ENCODE measurements at regions of chr10 and their contacts with region 1.

Region 1: DNA sequence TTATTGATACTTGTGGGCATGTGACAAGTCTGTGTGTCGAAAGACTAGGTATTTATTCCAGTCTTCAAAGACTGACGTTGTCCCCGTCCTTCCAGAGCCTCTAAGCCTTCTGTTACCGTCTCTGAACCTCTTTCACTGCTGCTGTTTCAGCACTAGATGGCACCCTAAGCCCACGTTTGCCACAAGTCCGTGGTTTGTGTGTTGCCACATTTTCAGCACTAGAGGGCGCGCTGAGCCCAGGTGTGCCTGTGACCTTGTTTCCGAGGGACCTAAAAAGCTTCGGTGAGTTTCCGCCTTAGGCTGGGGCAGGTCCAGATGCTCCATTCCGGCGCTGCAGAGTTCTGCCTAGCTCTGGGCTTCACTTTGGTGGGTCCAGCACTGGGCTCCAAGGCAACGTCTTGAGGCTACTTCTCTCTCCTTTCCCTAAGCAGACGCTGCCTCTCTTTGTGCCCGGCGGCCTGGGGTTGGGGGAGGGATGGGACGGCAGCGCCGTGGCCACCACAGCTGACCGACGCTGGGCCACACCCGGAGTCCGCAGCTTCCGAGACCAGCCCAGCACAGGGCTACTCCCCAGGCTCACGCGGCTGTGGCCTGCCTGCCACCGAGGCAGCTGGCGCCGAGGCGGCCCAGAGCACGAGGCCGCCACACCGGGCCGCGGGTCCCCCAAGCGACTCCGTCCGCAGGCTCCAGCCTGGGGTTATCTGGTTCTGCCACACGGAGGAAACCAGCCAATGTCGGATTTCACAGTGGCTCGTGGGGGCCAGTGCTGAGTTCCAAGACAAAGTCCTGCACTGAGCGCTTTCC is 520.2 kb downstream of the REEP3 start:
- DNase-seq: peak; percentile 65
- ATAC-seq: peak; percentile 84
- H3K4me3 ChIP-seq: no peak overlapping the region
- H3K27ac ChIP-seq: peak overlapping the region; percentile 38
- H3K4me1 ChIP-seq: peaks cover 34% of the 10 kb centered on the region
- H3K27me3 ChIP-seq: peaks cover 0 to 10% of the 10 kb centered on the region in 2 experiments; a peak in 2 of 5 replicates
- CTCF ChIP-seq: peak; percentile 100
- EP300 ChIP-seq: no peak
- POLR2A ChIP-seq: no peak
- RAD21 ChIP-seq: peak; percentile 100

Region 2: GRCh38 chr10:63504125-63504880 is 537.1 kb before region 1 on chr10:
- CTCF ChIA-PET with region 1: no interaction called
- POLR2A ChIA-PET with region 1: no interaction called
- in situ Hi-C with region 1: no loop called
- intact Hi-C with region 1: no loop called
- DNase-seq: no peak
- ATAC-seq: no peak; the same call in 2 of the 3 replicates
- H3K4me3 ChIP-seq: no peak overlapping the region
- H3K27ac ChIP-seq: peak overlapping the region; percentile 0
- H3K4me1 ChIP-seq: peaks cover 39% of the 10 kb centered on the region
- H3K27me3 ChIP-seq: no peaks in the 10 kb centered on the region
- CTCF ChIP-seq: no peak
- EP300 ChIP-seq: no peak
- POLR2A ChIP-seq: no peak
- RAD21 ChIP-seq: no peak

Region 3: GRCh38 chr10:63700209-63700613 is 341.2 kb before region 1 on chr10:
- CTCF ChIA-PET with region 1: no interaction called
- POLR2A ChIA-PET with region 1: no interaction called
- in situ Hi-C with region 1: no loop called
- intact Hi-C with region 1: no loop called
- DNase-seq: no peak
- ATAC-seq: no peak
- H3K4me3 ChIP-seq: no peak overlapping the region
- H3K27ac ChIP-seq: no peak overlapping the region
- H3K4me1 ChIP-seq: no peaks in the 10 kb centered on the region
- H3K27me3 ChIP-seq: no peaks in the 10 kb centered on the region
- CTCF ChIP-seq: no peak
- EP300 ChIP-seq: no peak
- POLR2A ChIP-seq: no peak
- RAD21 ChIP-seq: no peak

Region 4: GRCh38 chr10:64075604-64076003 is 34.2 kb after region 1 on chr10:
- CTCF ChIA-PET with region 1: no interaction called
- POLR2A ChIA-PET with region 1: no interaction called
- in situ Hi-C with region 1: no loop called
- intact Hi-C with region 1: loop called (anchors 1 kb)
- DNase-seq: peak; percentile 53
- ATAC-seq: peak; percentile 96
- H3K4me3 ChIP-seq: no peak overlapping the region
- H3K27ac ChIP-seq: peak overlapping the region; percentile 65
- H3K4me1 ChIP-seq: peaks cover 31% of the 10 kb centered on the region
- H3K27me3 ChIP-seq: no peaks in the 10 kb centered on the region
- CTCF ChIP-seq: no peak
- EP300 ChIP-seq: peak in 1 of 2 experiments; percentile 92; a peak in 2 of 4 replicates
- POLR2A ChIP-seq: no peak
- RAD21 ChIP-seq: no peak

Region 5: DNA sequence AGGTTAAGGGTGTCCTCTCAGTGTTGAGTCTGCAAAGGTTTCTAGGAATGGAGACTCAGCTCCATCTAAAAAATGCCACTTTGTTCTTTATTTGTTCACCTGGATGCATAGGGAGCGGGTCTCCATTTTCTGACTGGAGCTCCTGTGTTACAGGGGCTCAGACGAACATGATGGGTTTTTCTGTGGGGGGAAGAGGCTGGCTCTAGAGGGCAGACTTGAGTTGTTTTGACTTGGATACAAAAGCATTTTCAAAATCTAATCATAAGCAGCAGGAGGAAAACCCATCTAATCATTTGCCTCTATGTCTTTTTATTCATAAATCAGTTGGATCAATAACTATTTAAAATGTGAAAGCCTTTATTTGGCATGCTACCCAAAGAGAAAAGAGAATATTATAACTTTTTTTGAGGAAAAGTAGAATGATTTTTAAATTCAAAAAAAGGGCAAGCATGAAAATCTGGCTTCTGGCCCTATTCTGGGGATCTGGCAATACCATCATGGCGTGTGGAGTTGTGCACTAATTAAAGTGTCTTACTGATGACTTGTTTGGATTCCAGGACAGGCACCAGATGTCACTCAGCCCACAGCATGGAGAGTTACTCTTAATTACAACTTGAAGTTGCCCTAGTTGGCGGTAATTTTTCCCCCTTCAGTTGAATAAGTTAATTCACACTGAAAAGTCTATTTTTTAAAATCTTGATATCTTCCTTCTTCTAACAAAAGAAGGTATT is 74.7 kb after region 1 on chr10:
- CTCF ChIA-PET with region 1: no interaction called
- POLR2A ChIA-PET with region 1: no interaction called
- in situ Hi-C with region 1: no loop called
- intact Hi-C with region 1: loop called (anchors 1 kb)
- DNase-seq: no peak
- ATAC-seq: peak; percentile 87
- H3K4me3 ChIP-seq: no peak overlapping the region
- H3K27ac ChIP-seq: no peak overlapping the region
- H3K4me1 ChIP-seq: peaks cover 27% of the 10 kb centered on the region
- H3K27me3 ChIP-seq: no peaks in the 10 kb centered on the region
- CTCF ChIP-seq: peak; percentile 51
- EP300 ChIP-seq: no peak
- POLR2A ChIP-seq: no peak
- RAD21 ChIP-seq: no peak

Region 6: DNA sequence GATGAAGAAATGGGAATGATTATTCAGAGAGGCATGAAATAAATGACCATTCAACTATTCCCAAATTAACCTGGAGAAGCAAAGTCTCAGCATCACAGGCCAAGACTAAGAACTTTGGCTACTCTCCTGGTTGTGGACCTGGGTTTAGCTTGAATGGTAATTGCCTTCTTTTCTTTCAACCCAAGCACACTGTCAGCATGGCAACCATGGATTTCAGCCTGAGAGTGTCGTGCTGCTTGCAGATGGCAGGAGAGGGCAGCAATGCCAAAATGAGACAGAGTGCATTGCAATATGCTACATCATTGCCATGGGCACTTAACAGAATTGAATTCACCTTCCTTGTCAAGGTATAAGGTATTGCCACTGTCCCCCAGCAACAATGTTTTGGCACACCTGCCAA is 247.0 kb after region 1 on chr10:
- CTCF ChIA-PET with region 1: no interaction called
- POLR2A ChIA-PET with region 1: no interaction called
- in situ Hi-C with region 1: no loop called
- intact Hi-C with region 1: loop called (anchors 1 kb)
- DNase-seq: no peak
- ATAC-seq: no peak
- H3K4me3 ChIP-seq: no peak overlapping the region
- H3K27ac ChIP-seq: no peak overlapping the region
- H3K4me1 ChIP-seq: no peaks in the 10 kb centered on the region
- H3K27me3 ChIP-seq: no peaks in the 10 kb centered on the region
- CTCF ChIP-seq: no peak
- EP300 ChIP-seq: no peak
- POLR2A ChIP-seq: no peak
- RAD21 ChIP-seq: no peak

Region 7: GRCh38 chr10:64379898-64380297 is 338.5 kb after region 1 on chr10:
- CTCF ChIA-PET with region 1: interaction called, 11 read pairs
- POLR2A ChIA-PET with region 1: no interaction called
- in situ Hi-C with region 1: no loop called
- intact Hi-C with region 1: loop called (anchors 1 kb)
- DNase-seq: peak; percentile 27
- ATAC-seq: peak; percentile 97
- H3K4me3 ChIP-seq: no peak overlapping the region
- H3K27ac ChIP-seq: no peak overlapping the region
- H3K4me1 ChIP-seq: no peaks in the 10 kb centered on the region
- H3K27me3 ChIP-seq: no peaks in the 10 kb centered on the region
- CTCF ChIP-seq: peak; percentile 51
- EP300 ChIP-seq: no peak
- POLR2A ChIP-seq: no peak
- RAD21 ChIP-seq: peak; percentile 49; the same call in 1 of the 2 replicates

Measured in HepG2 (cell line).